Prostate gland (tissue), 2 donors: ENCODE measurements at regions of chr12 and their contacts with region 1.

Region 1: GRCh38 chr12:26853303-26854030 is 20.5 kb upstream of the ITPR2 start:
- DNase-seq: peak; percentile 63
- H3K4me3 ChIP-seq: no peak overlapping the region
- H3K27ac ChIP-seq: no peak overlapping the region
- H3K4me1 ChIP-seq: no peaks in the 10 kb centered on the region
- H3K27me3 ChIP-seq: no peaks in the 10 kb centered on the region
- CTCF ChIP-seq: peak; percentile 81 to 92 (median 86)
- POLR2A ChIP-seq: no peak

Region 2: GRCh38 chr12:26701604-26702215 is 151.8 kb before region 1 on chr12:
- intact Hi-C with region 1: no loop called
- DNase-seq: no peak
- H3K4me3 ChIP-seq: no peak overlapping the region
- H3K27ac ChIP-seq: no peak overlapping the region
- H3K4me1 ChIP-seq: peaks cover 11% of the 10 kb centered on the region
- H3K27me3 ChIP-seq: no peaks in the 10 kb centered on the region
- CTCF ChIP-seq: peak in 3 of 4 experiments; percentile 54 to 71 (median 61)
- POLR2A ChIP-seq: no peak

Region 3: DNA sequence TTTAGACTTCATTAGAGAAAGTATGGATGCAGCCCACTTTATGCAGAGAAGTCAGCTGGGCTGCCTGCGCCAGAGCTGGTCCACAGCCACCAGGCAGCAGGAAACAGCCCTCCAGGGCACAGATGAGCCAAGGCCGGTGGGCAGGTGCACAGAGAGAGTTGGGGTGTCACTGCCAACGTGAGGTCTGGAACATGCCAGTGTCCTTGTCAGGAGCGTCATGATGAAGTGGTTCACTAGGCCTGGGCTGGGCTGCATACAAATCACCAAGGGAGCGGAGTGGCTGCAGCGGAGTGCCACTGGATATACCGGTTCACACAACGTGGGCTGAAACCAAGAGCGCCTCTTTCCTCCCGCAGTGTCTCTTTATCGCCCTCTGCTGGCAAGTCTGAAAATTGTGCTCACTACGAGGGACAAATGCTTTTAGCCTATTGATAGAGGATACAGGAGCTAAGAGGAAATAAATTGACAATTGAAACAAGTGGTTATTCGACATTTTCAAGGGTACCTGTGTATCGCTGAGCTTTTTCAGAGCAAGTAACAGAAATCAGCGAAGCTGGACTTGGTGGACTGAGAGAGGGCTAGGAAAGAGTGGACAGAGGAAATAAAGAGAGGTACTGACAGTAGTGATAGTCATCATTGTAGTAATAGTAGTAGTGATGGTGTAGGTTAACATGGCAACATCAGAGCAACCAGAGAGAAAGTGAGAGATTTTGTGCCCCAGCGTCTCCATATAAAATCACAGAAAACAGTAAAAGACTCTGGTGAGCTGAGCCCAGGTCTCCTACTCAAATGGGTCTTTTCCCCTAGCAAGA is 31.5 kb after region 1 on chr12:
- intact Hi-C with region 1: loop called (anchors 2 kb)
- DNase-seq: peak; percentile 89
- H3K4me3 ChIP-seq: no peak overlapping the region
- H3K27ac ChIP-seq: no peak overlapping the region
- H3K4me1 ChIP-seq: no peaks in the 10 kb centered on the region
- H3K27me3 ChIP-seq: no peaks in the 10 kb centered on the region
- CTCF ChIP-seq: peak; percentile 94 to 97 (median 96)
- POLR2A ChIP-seq: no peak

Region 4: GRCh38 chr12:27014085-27014858 is 160.8 kb after region 1 on chr12 and contains the start of gene TM7SF3:
- intact Hi-C with region 1: loop called (anchors 10 kb)
- DNase-seq: peak; percentile 95
- H3K4me3 ChIP-seq: peak within 1 kb of the TSS; percentile 82 to 91
- H3K27ac ChIP-seq: peak within 1 kb of the TSS; percentile 88 to 91
- H3K4me1 ChIP-seq: no peaks in the 10 kb centered on the region
- H3K27me3 ChIP-seq: no peaks in the 10 kb centered on the region
- CTCF ChIP-seq: peak; percentile 92 to 99 (median 98)
- POLR2A ChIP-seq: peak; percentile 65
- total RNA-seq, gene TM7SF3: 94.5 to 132 TPM

Region 5: DNA sequence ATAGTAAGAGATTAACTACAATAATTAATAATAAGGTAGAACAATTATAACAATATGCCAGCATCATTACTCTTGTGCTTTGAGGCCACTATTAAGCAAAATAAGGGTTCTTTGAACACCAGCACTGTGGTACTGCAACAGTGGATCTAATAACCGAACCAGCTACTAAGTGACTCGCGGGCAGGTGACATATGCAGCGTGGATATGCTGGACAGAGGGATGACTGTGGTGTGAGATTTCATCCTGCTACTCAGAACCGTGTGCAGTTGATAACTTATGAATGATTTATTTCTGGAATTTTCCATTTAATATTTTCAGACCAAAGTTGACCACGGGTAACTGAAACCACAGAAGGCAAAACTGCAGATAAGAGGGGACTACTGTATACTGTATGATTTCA is 513.6 kb after region 1 on chr12:
- intact Hi-C with region 1: no loop called
- DNase-seq: no peak
- H3K4me3 ChIP-seq: no peak overlapping the region
- H3K27ac ChIP-seq: no peak overlapping the region
- H3K4me1 ChIP-seq: no peaks in the 10 kb centered on the region
- H3K27me3 ChIP-seq: no peaks in the 10 kb centered on the region
- CTCF ChIP-seq: no peak
- POLR2A ChIP-seq: no peak